ENCODE measurements at regions of chr4 and their contacts with region 1.

Region 1: DNA sequence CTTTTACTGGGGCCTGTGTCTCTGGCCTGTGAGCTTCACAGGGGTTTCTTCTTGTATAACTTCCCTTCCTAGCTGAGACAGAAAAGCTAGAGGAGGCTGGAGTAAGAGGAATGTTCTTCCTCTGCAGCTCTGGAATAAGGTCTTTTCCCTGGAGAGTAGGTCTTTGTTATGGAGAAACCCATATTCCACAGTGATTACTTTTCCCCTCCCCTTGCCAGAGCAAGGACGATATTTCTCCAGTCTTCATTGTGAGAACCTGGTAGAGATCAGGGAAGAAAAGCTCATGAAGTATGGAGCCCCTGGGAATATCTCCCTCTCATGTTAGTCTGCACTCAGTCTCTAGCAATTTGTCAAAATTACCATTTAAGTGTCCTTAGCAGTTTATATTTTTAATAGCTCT is 18.7 kb upstream of the GLRB start:
- DNase-seq: no peak
- H3K4me3 ChIP-seq: no peak overlapping the region
- H3K27ac ChIP-seq: no peak overlapping the region
- H3K4me1 ChIP-seq: no peaks in the 10 kb centered on the region
- H3K27me3 ChIP-seq: no peaks in the 10 kb centered on the region
- CTCF ChIP-seq: no peak

Region 2: DNA sequence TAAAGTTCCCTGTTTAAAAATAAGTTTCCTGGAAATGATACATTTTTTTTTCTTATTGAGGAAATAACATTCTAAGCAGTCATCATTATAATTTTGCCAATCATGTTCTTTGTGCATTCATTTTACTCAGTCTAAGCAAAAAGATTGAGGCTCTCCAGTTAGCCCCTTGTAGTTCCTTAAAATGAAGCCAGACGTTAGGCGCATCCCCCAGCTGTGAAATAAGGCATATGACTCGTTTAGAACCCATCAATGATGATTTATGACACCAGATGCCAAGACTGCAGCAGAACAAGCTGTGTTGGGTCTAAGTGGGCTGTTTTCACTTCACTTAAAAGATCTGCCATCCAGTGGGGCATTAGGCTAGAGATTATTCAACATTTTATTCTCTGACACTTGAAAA is 102.6 kb before region 1 on chr4:
- CTCF ChIA-PET with region 1: no interaction called
- POLR2A ChIA-PET with region 1: interaction called, 12 read pairs
- intact Hi-C with region 1: no loop called
- DNase-seq: no peak
- H3K4me3 ChIP-seq: no peak overlapping the region
- H3K27ac ChIP-seq: no peak overlapping the region
- H3K4me1 ChIP-seq: peaks cover 24% of the 10 kb centered on the region
- H3K27me3 ChIP-seq: no peaks in the 10 kb centered on the region
- CTCF ChIP-seq: no peak

Measured in PC-9 (cell line).